OCI-LY7 (cell line): ENCODE measurements at regions of chr7 and their contacts with region 1.

Region 1: DNA sequence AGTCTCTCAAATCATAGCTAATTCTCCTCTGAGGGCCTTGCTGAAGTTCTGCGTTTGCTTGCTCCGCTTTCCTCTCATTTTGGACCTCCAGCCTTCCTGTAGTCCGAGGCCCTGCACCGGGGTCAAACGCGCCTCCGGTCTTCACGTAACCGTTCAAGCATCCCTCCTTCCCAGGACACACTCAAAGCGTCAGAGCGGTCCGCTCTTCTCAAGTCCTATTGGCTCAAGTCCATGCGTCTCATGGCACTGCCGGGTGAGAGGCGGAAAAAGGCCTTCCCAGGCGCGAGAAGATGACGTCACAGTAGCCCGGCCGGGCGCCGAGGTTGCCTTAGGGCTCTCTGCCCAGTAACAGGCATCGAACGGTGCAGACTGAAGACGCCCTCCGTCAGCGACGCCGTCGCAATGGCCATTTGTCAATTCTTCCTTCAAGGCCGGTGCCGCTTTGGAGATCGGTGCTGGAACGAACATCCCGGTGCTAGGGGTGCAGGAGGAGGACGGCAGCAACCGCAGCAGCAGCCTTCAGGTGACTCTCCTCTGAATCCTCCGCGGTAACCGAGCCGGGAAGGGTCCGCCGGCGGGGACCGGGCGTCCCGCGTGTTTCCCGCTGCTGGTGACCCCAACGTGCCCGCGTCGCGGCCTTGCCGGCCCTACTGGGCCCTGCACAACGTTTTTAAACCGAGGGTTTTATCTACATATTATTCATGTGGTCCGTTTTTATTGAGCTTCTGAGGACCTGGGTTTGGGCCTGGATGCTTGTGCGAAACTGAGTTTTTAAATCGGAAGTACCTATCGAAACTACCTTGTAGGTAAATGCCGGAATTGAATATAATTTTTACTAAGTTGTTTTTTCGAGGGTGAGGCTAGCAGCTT is at the start of gene NUP42:
- DNase-seq: peak; percentile 99
- H3K4me3 ChIP-seq: peak within 1 kb of the TSS; percentile 84
- H3K27ac ChIP-seq: peak within 1 kb of the TSS; percentile 76
- H3K4me1 ChIP-seq: peaks cover 22% of the 10 kb centered on the region
- CTCF ChIP-seq: no peak
- total RNA-seq, gene NUP42: 103 and 119 TPM in 2 replicates

Region 2: GRCh38 chr7:21427182-21427870 is 1754.6 kb before region 1 on chr7:
- CTCF ChIA-PET with region 1: no interaction called
- POLR2A ChIA-PET with region 1: interaction called, 4 read pairs
- intact Hi-C with region 1: loop called (anchors 10 kb)
- DNase-seq: peak; percentile 98
- H3K4me3 ChIP-seq: peak overlapping the region; percentile 88
- H3K27ac ChIP-seq: peak overlapping the region; percentile 86
- H3K4me1 ChIP-seq: peaks cover 42% of the 10 kb centered on the region
- CTCF ChIP-seq: no peak

Region 3: DNA sequence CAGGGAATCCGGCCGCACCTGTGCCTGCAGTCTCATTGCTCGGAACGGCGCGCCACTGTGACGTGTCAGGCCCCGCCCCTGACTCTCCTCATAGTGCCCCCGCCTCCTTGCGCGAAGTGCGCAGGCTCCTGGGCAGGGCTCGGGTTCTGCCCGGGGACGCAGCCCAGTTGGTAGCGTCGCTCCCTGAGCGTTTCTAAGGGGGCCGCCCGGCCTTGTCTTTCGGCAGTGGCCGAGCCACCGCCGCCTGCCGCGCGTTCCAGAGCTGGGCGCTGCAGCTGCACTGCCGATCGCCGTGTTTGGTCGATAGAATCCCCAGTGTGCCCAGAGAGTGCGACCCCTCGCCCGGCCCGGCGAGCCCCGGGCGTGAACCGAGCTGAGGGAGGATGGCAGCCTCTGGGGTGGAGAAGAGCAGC is 76.3 kb before region 1 on chr7 and contains the start of gene KLHL7:
- CTCF ChIA-PET with region 1: interaction called, 3 read pairs
- POLR2A ChIA-PET with region 1: interaction called, 12 read pairs
- intact Hi-C with region 1: loop called (anchors 1 kb)
- DNase-seq: peak; percentile 96
- H3K4me3 ChIP-seq: peak within 1 kb of the TSS; percentile 84
- H3K27ac ChIP-seq: peak within 1 kb of the TSS; percentile 80
- H3K4me1 ChIP-seq: peaks cover 22% of the 10 kb centered on the region
- CTCF ChIP-seq: no peak
- total RNA-seq, gene KLHL7: 24.4 and 25.8 TPM in 2 replicates

Region 4: GRCh38 chr7:23135755-23136154 is 46.2 kb before region 1 on chr7:
- CTCF ChIA-PET with region 1: no interaction called
- POLR2A ChIA-PET with region 1: no interaction called
- intact Hi-C with region 1: no loop called
- DNase-seq: no peak
- H3K4me3 ChIP-seq: no peak overlapping the region
- H3K27ac ChIP-seq: no peak overlapping the region
- H3K4me1 ChIP-seq: no peaks in the 10 kb centered on the region
- CTCF ChIP-seq: no peak

Region 5: DNA sequence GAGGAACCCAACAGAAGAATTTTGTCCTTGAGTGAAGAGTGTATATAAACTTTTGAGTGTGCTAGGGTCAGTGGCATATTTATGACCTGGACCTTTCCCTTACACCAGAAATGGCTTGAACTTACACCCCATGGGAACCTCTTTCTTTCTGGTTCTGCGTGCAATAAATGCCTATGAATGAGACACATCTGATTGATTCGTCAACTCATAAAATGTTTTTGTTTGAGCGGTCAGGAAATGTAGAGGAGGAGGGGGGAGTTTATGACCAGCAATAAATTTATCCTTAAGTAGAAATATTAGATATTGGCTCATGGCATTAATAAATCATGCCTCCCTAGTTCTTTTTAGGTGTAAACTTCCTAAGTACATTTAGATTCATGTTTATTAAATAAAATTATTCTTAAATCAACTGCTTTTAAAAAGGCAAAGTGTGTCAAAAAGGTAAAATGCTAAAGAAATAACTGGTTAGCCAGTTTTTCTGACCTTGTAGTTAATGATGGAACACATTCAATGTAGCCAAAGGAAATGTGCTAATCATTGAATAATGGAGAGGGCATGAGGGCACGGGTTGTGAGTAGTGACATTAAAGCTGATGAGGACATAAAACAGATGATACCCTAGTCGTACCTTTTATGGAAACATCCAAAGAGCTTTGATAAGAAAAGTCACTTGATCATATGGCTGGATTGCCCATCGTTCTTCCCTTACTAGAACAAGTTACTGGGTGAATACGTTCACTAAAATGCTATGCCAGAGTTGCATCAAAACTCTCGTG is 13.6 kb before region 1 on chr7:
- CTCF ChIA-PET with region 1: interaction called, 3 read pairs
- POLR2A ChIA-PET with region 1: interaction called, 10 read pairs
- intact Hi-C with region 1: no loop called
- DNase-seq: no peak
- H3K4me3 ChIP-seq: no peak overlapping the region
- H3K27ac ChIP-seq: no peak overlapping the region
- H3K4me1 ChIP-seq: no peaks in the 10 kb centered on the region
- CTCF ChIP-seq: no peak

Region 6: DNA sequence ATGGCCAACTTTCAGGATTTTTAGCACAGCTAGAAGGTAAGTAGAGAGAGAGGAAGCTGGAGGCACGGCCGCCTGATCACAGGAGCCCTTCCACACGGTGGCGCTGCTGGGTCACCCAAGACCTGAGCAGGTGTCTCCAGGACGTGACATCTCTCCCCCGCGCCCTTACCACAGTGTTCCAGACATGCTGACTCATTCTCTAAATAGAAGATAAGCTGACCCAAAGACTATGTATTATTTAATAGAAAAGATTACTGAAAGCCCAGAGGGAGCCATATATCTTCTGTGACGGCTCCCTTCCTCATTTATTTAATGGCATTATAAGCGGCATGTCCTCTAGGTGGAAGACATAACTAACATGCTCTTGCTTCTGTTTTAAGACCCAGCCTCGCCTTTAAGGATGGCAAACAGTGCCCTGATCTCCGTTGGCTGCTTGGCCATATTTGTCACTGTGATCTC is 91.3 kb after region 1 on chr7:
- CTCF ChIA-PET with region 1: no interaction called
- POLR2A ChIA-PET with region 1: no interaction called
- intact Hi-C with region 1: no loop called
- DNase-seq: peak; percentile 93
- H3K4me3 ChIP-seq: peak overlapping the region; percentile 57
- H3K27ac ChIP-seq: peak overlapping the region; percentile 7
- H3K4me1 ChIP-seq: peaks cover 15% of the 10 kb centered on the region
- CTCF ChIP-seq: peak; percentile 95

Region 7: GRCh38 chr7:23373151-23374004 is 191.5 kb after region 1 on chr7:
- CTCF ChIA-PET with region 1: no interaction called
- POLR2A ChIA-PET with region 1: no interaction called
- intact Hi-C with region 1: loop called (anchors 5 kb)
- DNase-seq: peak; percentile 92
- H3K4me3 ChIP-seq: peak overlapping the region; percentile 51
- H3K27ac ChIP-seq: peak overlapping the region; percentile 94
- H3K4me1 ChIP-seq: peaks cover 75% of the 10 kb centered on the region
- CTCF ChIP-seq: no peak

Region 8: GRCh38 chr7:23531794-23532489 is 350.0 kb after region 1 on chr7 and contains the start of gene TRA2A:
- CTCF ChIA-PET with region 1: no interaction called
- POLR2A ChIA-PET with region 1: no interaction called
- intact Hi-C with region 1: loop called (anchors 10 kb)
- DNase-seq: peak; percentile 96
- H3K4me3 ChIP-seq: peak within 1 kb of the TSS; percentile 98
- H3K27ac ChIP-seq: peak within 1 kb of the TSS; percentile 94
- H3K4me1 ChIP-seq: peaks cover 45% of the 10 kb centered on the region
- CTCF ChIP-seq: 0 out of 2 replicates have a peak, but pooled peaks have one; percentile 14
- total RNA-seq, gene TRA2A: 41.4 and 44.9 TPM in 2 replicates